ENCODE measurements at regions of chr11 and their contacts with region 1.

Region 1: DNA sequence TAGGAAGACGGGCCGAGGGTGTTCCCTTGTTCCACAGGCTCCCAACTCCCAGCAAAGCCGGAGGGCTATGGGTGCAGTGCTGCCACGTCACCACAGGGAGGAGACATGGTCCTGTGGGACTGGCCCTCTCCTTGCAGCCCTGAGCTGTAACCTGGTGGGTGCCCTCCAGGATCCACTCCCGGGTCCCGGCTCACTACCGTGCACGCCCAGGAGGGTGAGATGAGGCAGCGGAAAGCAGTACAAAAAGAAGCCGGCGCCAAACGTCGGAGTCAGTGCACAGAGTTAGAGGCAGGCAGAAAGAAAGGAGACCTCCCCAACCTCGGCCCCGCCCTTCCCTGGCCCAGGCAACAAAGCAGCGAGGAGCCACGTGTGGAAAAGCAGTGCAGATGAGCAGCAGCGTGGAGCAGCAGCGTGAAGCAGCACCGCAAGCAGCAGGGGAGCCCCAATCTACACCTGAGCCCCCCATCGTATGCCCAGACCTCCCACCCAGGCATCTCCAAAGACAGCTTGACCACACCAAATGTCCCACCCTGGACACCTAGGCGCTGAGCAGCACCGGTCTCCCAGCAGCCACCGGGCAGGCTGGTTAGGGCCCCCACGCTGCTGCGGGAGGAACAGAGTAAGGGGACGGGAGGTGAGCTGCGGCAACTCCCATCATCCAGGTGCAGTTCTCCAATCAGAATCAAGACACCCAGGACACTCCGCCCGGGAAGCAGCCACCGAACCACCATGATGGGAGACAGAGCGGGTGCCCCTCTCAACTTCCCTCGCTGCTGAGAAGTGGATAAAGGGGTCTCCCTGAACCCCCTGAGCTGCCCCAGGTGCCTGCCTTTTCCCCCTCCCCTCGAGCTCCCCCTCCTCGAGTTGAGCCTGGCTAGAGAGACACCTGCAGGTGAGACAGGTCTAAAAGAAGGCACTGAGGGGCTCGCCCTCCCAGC is 28.8 kb downstream of the IGSF9B start:
- DNase-seq: peak; percentile 84
- H3K4me3 ChIP-seq: peak overlapping the region; percentile 52
- H3K27ac ChIP-seq: no peak overlapping the region
- H3K4me1 ChIP-seq: no peaks in the 10 kb centered on the region
- H3K27me3 ChIP-seq: 0 out of 2 replicates have a peak, but pooled peaks cover 4% of the 10 kb centered on the region

Region 2: DNA sequence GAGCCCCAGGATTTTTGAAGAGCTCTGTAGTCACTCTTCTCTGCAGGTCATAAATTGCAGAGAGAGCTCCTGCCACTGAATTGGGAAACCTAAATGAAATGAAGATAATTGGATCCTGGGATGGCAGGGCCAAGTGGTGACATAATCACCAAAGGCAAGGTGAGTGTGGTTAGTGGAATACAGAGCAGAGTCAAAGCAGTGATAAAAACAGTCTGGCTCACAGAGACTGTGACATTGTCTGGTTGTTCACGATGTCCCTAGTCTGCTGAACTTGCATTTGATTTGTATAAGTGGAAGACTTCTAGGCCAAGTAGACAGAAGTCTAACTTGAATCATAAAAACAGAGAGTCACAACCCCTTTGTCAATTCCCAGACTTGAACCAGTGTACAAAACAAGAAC is 55.8 kb before region 1 on chr11:
- in situ Hi-C with region 1: no loop called
- DNase-seq: no peak
- H3K4me3 ChIP-seq: no peak overlapping the region
- H3K27ac ChIP-seq: no peak overlapping the region
- H3K4me1 ChIP-seq: no peaks in the 10 kb centered on the region
- H3K27me3 ChIP-seq: no peaks in the 10 kb centered on the region

Region 3: DNA sequence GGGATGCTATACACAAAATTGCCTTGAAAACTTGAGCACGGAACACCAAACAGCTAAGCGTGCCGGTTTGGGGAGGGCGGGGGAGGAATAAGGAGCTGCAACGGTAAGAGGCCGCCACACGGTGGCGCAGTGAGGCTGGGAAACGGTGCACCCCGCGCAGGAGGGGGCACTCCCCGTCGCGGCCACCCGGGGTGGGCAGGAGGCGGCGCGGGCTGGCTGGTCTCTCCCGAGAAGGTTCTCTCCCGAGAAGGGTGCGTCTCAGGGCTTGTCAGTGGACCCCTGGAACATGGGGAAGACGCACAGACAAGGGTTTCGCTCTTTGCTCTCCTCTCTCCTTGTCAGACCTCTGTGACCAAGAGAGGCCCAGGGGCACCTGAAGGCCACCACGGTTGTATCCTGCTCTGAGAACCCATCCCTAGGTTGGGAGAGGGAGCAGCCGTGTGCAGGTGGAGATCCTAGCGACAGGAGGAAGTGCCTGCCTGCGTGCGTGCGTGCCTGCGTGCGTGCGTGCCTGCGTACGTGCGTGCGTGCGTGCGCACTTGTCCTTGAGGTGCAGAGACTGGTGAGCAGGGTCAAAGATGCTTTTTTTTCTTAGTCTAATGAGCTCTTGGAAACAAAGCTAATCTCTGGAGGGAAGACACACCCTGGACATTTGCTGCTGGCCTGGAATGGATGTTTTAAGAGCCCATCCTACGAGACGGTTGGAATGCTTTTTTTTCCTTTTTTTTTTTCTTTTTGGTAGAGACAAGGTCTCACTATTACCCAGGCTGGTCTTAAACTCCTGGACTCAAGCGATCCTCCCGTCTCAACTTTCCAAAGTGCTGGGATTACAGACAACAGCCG is 122.8 kb after region 1 on chr11:
- in situ Hi-C with region 1: loop called (anchors 10 kb)
- DNase-seq: peak; percentile 80
- H3K4me3 ChIP-seq: peak overlapping the region; percentile 52
- H3K27ac ChIP-seq: no peak overlapping the region
- H3K4me1 ChIP-seq: peaks cover 14% of the 10 kb centered on the region
- H3K27me3 ChIP-seq: no peaks in the 10 kb centered on the region

Region 4: DNA sequence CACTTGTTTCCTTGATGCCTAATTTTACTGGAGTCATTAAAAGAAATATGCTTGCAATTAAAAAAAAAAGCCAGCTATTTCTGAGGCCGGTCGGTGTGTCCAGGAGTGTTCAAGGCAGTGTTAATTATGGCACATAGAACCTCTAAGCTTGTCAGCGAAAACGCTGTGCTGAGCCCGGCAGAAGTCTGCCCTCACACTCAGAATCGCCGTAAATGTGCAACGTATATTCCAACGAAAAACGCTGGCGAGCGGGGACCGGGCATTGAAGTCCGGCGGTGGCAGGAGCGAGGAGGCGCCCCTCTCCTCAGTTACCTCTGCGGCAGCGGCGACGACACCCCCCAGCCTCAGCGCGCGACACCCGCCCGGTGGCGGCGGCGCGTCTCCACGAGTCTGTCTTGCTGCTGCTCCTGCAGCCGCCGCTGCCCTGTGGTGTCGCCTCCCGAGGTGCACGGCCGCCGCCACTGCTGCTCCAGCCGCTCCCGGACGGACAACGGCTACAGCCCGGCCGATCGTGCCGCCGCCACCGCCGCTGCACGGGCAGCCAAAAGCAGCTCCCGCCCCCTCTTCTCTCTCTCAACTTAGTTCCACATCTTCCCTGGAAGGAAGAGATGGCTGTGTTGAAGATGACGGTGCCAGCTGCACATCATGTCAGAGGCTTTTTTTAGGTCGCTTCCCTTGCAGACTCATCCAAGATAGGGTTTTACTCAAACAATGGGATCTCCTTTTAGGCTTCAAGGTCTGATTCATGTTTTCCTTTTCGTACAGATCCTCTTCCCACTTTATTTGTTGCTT is 196.9 kb after region 1 on chr11:
- in situ Hi-C with region 1: no loop called
- DNase-seq: peak; percentile 43
- H3K4me3 ChIP-seq: no peak overlapping the region
- H3K27ac ChIP-seq: peak overlapping the region; percentile 72
- H3K4me1 ChIP-seq: peaks cover 40% of the 10 kb centered on the region
- H3K27me3 ChIP-seq: no peaks in the 10 kb centered on the region

Region 5: DNA sequence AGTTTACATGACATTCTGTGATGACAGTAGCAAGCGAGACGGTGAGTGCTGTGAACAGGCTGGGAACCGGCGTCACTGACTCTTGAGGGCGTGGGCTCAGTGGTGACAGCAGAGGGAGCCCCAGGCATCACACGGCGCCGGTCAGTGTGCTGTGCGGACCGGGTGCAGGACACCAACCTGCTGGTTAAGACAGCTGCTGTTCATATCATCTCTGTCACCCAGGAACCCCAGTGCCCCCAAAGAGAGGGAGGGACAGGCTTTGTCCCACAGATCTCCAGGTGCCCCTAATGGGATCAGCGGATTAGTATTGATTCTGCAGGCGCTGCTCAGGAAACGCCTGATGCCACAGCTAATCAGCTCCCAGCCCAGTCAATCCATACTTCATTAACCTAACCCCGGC is 465.7 kb after region 1 on chr11:
- in situ Hi-C with region 1: no loop called
- DNase-seq: no peak
- H3K4me3 ChIP-seq: no peak overlapping the region
- H3K27ac ChIP-seq: no peak overlapping the region
- H3K4me1 ChIP-seq: no peaks in the 10 kb centered on the region
- H3K27me3 ChIP-seq: no peaks in the 10 kb centered on the region

Region 6: GRCh38 chr11:134559602-134559962 is 631.6 kb after region 1 on chr11:
- in situ Hi-C with region 1: no loop called
- DNase-seq: no peak
- H3K4me3 ChIP-seq: no peak overlapping the region
- H3K27ac ChIP-seq: no peak overlapping the region
- H3K4me1 ChIP-seq: no peaks in the 10 kb centered on the region
- H3K27me3 ChIP-seq: no peaks in the 10 kb centered on the region

Measured in GM23248 (cell line).